Activated CD4-positive, alpha-beta T cell treated with anti-CD3 and anti-CD28 coated beads, Interleukin-2, amount 10 ng/mL, durations not matched to agents 7 days and 5 days (primary cell): ENCODE measurements at regions of chr17 and their contacts with region 1.

Region 1: DNA sequence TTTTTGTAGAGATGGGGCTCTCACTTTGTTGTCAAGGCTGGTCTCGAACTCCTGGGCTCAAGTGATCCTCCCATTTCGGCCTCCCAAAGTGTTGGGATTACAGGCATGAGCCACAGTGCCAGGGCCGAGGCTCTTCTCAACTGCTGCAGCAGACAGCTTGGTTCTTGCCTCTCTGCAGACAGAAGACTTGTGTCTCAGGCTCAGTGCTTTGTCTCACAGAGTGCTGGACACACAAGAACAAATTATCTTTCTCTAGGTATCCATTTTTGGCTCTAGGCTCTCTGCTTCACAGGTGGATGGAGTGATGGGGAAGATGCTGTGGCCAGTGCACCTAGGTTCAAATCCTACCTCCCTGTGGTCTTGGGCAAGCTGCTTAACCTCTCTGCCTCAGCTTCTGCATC is 80.8 kb upstream of the RNU2-1 start:
- DNase-seq: no peak
- H3K4me3 Mint-ChIP-seq: no peak overlapping the region
- H3K27ac Mint-ChIP-seq: no peak overlapping the region
- H3K4me1 Mint-ChIP-seq: peaks cover 16% of the 10 kb centered on the region
- H3K27me3 Mint-ChIP-seq: no peaks in the 10 kb centered on the region

Region 2: DNA sequence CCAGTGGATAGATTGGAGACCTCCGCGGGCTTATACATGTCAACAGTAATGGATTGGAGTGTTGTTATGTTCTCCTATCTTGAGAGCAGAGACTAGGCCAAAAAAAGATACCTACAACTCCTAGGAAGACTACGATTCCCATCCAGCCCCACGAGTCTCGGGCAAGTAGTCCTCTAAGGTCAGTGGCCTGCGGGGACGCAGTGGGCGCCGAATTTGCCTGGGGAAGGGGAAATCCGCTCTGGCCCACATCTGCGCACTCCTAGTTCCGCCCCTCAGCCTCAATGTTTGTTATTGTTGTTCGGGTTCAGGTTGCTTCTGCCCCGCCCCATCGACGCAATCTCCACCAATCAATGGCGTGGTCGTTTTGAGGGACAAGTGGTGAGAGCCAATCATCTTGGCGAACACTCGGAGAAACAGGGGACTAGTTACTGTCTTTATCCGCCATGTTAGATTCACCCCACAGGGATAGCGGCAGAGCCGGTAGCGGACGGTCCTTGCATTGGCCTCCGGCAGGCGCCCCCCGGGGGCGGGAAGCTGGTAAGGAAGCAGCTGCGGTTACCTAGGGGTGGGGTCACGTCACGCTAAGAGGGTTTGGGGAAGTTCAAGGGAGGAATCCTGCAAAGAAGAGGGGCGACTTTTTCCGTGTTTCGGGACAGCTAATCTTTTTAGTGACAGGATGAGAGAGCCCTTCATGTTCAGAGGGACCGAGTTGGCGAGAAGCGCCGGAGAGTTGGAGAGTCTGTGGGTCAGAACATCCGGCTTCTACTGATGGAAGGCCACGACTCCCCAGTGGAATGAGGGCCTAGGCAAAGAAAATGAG is 143.6 kb before region 1 on chr17 and contains the start of gene NBR1:
- CTCF ChIA-PET with region 1: no interaction called
- POLR2A ChIA-PET with region 1: interaction called, 14 read pairs
- DNase-seq: peak; percentile 98
- H3K4me3 Mint-ChIP-seq: no peak within 1 kb of the TSS
- H3K27ac Mint-ChIP-seq: no peak within 1 kb of the TSS
- H3K4me1 Mint-ChIP-seq: peaks cover 39% of the 10 kb centered on the region
- H3K27me3 Mint-ChIP-seq: no peaks in the 10 kb centered on the region
- total RNA-seq, gene NBR1: 53.9 to 54.3 TPM

Region 3: GRCh38 chr17:43211480-43212402 is 102.9 kb before region 1 on chr17 and contains the start of gene TMEM106A:
- CTCF ChIA-PET with region 1: interaction called, 3 read pairs
- POLR2A ChIA-PET with region 1: interaction called, 17 read pairs
- DNase-seq: peak; percentile 80
- H3K4me3 Mint-ChIP-seq: peak within 1 kb of the TSS; percentile 95
- H3K27ac Mint-ChIP-seq: peak within 1 kb of the TSS; percentile 87
- H3K4me1 Mint-ChIP-seq: peaks cover 40% of the 10 kb centered on the region
- H3K27me3 Mint-ChIP-seq: no peaks in the 10 kb centered on the region
- total RNA-seq, gene TMEM106A: 11.7 to 11.8 TPM

Region 4: DNA sequence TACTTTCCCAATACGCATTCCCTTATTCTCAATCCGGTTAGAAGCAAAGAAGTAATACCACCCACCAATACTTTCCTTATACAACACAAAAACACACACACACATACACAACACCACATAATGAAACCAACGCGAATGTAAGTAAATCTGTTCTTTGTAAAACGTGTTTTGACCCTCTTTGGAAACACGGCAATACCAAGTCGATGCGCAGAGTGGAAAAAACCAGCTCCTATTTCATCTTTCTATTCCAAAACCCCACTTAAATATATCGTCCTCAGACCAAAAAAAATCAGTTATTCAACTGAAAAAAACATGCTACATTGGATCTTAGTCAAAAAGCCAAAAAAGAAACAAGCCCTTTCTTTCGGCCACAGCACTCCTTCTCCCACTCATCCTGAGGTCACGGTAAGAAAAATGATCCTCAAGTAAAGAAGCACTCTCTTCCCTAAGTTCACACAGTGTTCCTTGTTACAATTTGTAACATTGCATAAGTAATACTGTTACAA is 53.2 kb after region 1 on chr17:
- CTCF ChIA-PET with region 1: no interaction called
- POLR2A ChIA-PET with region 1: interaction called, 26 read pairs
- DNase-seq: peak; percentile 71
- H3K4me3 Mint-ChIP-seq: peak overlapping the region; percentile 97
- H3K27ac Mint-ChIP-seq: peak overlapping the region; percentile 100
- H3K4me1 Mint-ChIP-seq: peaks cover 55% of the 10 kb centered on the region
- H3K27me3 Mint-ChIP-seq: no peaks in the 10 kb centered on the region

Region 5: GRCh38 chr17:43418441-43419374 is 104.1 kb after region 1 on chr17:
- CTCF ChIA-PET with region 1: no interaction called
- POLR2A ChIA-PET with region 1: no interaction called
- DNase-seq: no peak
- H3K4me3 Mint-ChIP-seq: no peak overlapping the region
- H3K27ac Mint-ChIP-seq: no peak overlapping the region
- H3K4me1 Mint-ChIP-seq: no peaks in the 10 kb centered on the region
- H3K27me3 Mint-ChIP-seq: peaks cover 21% of the 10 kb centered on the region